ENCODE measurements at regions of chr14 and their contacts with region 1.

Region 1: GRCh38 chr14:41749429-41749828 is 142.8 kb downstream of the LRFN5 start:
- DNase-seq: no peak
- ATAC-seq: peak; percentile 50; the same call in 2 of the 3 replicates
- H3K4me3 ChIP-seq: no peak overlapping the region
- H3K27ac ChIP-seq: no peak overlapping the region
- H3K4me1 ChIP-seq: no peaks in the 10 kb centered on the region
- H3K27me3 ChIP-seq: no peaks in the 10 kb centered on the region
- CTCF ChIP-seq: no peak
- EP300 ChIP-seq: no peak
- POLR2A ChIP-seq: no peak
- RAD21 ChIP-seq: no peak

Region 2: DNA sequence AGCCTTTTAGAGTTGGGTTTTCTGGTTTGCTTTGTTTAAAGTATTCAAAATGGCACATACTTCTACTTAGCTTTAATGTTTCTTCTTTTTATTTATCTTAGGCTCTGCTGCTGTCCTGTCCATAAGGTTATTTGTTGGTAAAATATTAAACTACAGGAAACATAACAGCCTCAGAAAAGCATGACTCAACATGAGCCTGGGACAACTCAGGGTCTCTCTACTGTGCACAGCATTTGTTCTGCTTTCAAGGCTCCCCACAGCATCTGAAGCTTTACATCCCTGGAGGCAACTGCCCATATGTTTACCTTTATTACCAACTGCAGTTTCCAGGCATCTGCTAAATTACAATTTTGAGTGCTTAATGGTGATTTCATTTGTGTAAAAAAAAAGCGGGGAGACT is 1363.0 kb before region 1 on chr14:
- CTCF ChIA-PET with region 1: no interaction called
- POLR2A ChIA-PET with region 1: interaction called, 13 read pairs
- RAD21 ChIA-PET with region 1: no interaction called
- SMC1A ChIA-PET with region 1: no interaction called
- in situ Hi-C with region 1: no loop called
- intact Hi-C with region 1: no loop called
- DNase-seq: no peak
- ATAC-seq: peak; percentile 48; the same call in 1 of the 3 replicates
- H3K4me3 ChIP-seq: no peak overlapping the region
- H3K27ac ChIP-seq: no peak overlapping the region
- H3K4me1 ChIP-seq: no peaks in the 10 kb centered on the region
- H3K27me3 ChIP-seq: no peaks in the 10 kb centered on the region
- CTCF ChIP-seq: no peak
- EP300 ChIP-seq: no peak
- POLR2A ChIP-seq: no peak
- RAD21 ChIP-seq: no peak